ENCODE measurements at regions of chr7 and their contacts with region 1.

Region 1: DNA sequence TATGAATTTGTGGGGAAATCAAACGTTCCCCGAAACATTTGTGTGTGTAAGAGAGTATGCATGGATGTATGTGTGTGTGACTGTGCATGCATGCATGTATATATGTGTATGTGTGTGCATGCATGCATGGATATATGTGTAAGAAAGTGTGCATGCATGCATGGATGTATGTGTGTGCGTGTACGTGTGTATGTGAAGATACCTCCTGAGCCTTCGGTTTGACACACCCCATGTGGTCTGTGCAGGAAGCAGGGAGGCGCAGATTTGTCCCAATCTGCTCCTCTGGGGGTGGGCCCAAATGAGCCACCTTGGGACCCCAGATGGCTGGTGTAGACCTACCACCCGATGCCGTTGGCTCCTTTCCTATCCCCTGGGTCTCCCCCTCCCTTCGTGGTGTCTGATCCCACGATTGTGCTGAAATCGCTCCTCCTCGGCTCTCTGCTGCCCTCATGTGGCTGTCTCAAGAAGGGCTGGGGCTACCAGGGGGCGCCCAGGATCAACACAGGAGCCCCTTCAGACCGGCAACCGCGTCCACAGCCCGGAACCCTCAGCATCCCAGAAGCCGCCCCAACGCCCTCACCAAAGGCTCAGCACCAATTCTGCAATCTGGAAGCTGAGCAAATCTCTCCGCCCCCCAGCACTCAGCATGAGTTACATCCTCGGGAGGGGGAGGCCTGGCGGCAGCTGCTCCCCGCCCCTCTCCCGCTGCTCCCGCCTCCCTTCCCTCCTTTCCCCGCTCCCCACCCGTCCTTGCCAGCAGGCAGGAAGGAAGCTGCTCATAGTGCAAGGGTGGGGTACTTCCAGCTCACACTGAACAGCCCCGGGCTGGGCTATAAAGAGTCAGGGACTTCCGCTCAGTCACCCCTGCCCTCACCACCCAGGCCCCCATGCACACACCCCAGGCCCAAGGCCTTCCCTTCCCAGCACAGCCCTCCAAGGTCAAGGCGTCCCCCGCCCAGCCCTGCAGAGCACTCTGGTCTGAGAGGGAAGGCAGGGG is 2.3 kb upstream of the NOS3 start:
- DNase-seq: peak in 1 of 2 experiments; percentile 98
- H3K4me3 ChIP-seq: peak overlapping the region in 3 of 4 experiments; percentile 30 to 55 (median 42); a peak in 7 of 8 replicates
- H3K27ac ChIP-seq: no peak overlapping the region; the same call in 1 of the 2 replicates
- H3K4me1 ChIP-seq: peaks cover 4 to 17% (median 11%) of the 10 kb centered on the region in 4 experiments
- H3K27me3 ChIP-seq: no peaks in the 10 kb centered on the region
- CTCF ChIP-seq: peak in 2 of 3 experiments; percentile 92 to 97; a peak in 3 of 4 replicates
- EP300 ChIP-seq: no peak
- POLR2A ChIP-seq: no peak
- RAD21 ChIP-seq: peak; percentile 89 to 96

Region 2: DNA sequence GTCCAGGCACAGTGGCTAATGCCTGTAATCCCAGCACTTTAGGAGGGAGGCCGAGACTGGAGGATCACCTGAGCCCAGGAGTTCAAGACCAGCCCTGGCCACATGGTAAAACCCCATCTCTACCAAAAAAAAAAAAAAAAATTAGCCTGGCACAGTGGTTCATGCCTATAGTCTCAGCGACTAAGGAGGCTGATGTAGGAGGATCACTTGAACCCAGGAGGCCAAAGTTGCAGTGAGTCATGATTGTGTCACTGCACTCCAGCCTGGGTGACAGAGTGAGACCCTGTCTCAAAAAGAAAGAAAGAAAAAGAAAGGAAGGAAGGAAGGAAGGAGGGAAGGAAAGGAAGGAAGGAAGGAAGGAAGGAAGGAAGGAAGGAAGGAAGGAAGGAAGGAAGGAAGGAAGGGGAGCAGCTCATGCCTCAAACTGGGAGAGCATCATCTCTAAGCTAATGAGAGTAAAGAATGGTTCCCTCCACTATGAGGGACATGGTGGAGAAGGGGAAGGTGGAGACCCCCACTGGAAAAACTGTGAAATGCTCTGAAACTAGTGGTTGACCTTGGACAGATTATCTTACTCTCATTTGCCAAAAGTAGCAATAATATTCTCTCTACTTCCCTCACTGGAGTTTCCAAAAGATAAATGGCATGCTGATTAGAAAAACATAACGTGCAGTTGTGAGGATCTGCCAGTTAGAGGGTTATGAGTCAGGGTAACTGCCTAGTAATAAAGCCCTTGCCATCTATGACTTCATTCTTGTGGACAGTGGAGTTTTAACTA is 234.5 kb before region 1 on chr7:
- CTCF ChIA-PET with region 1: no interaction called
- POLR2A ChIA-PET with region 1: no interaction called
- DNase-seq: no peak
- H3K4me3 ChIP-seq: no peak overlapping the region
- H3K27ac ChIP-seq: no peak overlapping the region
- H3K4me1 ChIP-seq: no peaks in the 10 kb centered on the region
- H3K27me3 ChIP-seq: peaks cover 0 to 13% (median 7%) of the 10 kb centered on the region in 4 experiments; a peak in 5 of 7 replicates
- CTCF ChIP-seq: peak in 2 of 3 experiments; percentile 60 to 64; a peak in 3 of 4 replicates
- EP300 ChIP-seq: no peak
- POLR2A ChIP-seq: no peak
- RAD21 ChIP-seq: peak; percentile 77 to 78

Region 3: GRCh38 chr7:150941981-150942590 is 46.4 kb before region 1 on chr7:
- CTCF ChIA-PET with region 1: interaction called, 35 read pairs
- POLR2A ChIA-PET with region 1: no interaction called
- DNase-seq: no peak
- H3K4me3 ChIP-seq: no peak overlapping the region
- H3K27ac ChIP-seq: no peak overlapping the region
- H3K4me1 ChIP-seq: peaks cover 0 to 24% (median 12%) of the 10 kb centered on the region in 4 experiments; a peak in 6 of 7 replicates
- H3K27me3 ChIP-seq: peaks cover 0 to 9% (median 4%) of the 10 kb centered on the region in 4 experiments; a peak in 2 of 7 replicates
- CTCF ChIP-seq: no peak
- EP300 ChIP-seq: no peak
- POLR2A ChIP-seq: no peak
- RAD21 ChIP-seq: no peak

Region 4: GRCh38 chr7:150974468-150975391 is 13.8 kb before region 1 on chr7:
- CTCF ChIA-PET with region 1: interaction called, 797 read pairs
- POLR2A ChIA-PET with region 1: interaction called, 3 read pairs
- DNase-seq: peak in 1 of 2 experiments; percentile 72
- H3K4me3 ChIP-seq: peak overlapping the region; percentile 33 to 93 (median 58)
- H3K27ac ChIP-seq: no peak overlapping the region
- H3K4me1 ChIP-seq: peaks cover 5 to 39% (median 31%) of the 10 kb centered on the region in 4 experiments
- H3K27me3 ChIP-seq: peaks cover 2 to 24% (median 22%) of the 10 kb centered on the region in 4 experiments
- CTCF ChIP-seq: peak in 1 of 3 experiments; percentile 23; a peak in 2 of 4 replicates
- EP300 ChIP-seq: no peak
- POLR2A ChIP-seq: no peak
- RAD21 ChIP-seq: no peak

Region 5: GRCh38 chr7:151028131-151028947 is 39.8 kb after region 1 on chr7 and contains the start of gene ABCB8:
- CTCF ChIA-PET with region 1: interaction called, 12 read pairs
- POLR2A ChIA-PET with region 1: no interaction called
- DNase-seq: peak; percentile 99
- H3K4me3 ChIP-seq: peak within 1 kb of the TSS; percentile 66 to 97 (median 80)
- H3K27ac ChIP-seq: peak within 1 kb of the TSS; percentile 15; the same call in 1 of the 2 replicates
- H3K4me1 ChIP-seq: peaks cover 0 to 4% (median 2%) of the 10 kb centered on the region in 4 experiments; a peak in 2 of 7 replicates
- H3K27me3 ChIP-seq: peaks cover 0 to 4% (median 0%) of the 10 kb centered on the region in 4 experiments; a peak in 2 of 7 replicates
- CTCF ChIP-seq: peak; percentile 23 to 43 (median 30)
- EP300 ChIP-seq: no peak
- POLR2A ChIP-seq: no peak
- RAD21 ChIP-seq: peak; percentile 21 to 51; a peak in 3 of 4 replicates
- total RNA-seq, gene ABCB8: 22.2 and 27.0 TPM in 2 replicates

Region 6: GRCh38 chr7:151327659-151328058 is 339.1 kb after region 1 on chr7:
- CTCF ChIA-PET with region 1: no interaction called
- POLR2A ChIA-PET with region 1: no interaction called
- DNase-seq: no peak
- H3K4me3 ChIP-seq: no peak overlapping the region
- H3K27ac ChIP-seq: no peak overlapping the region
- H3K4me1 ChIP-seq: peaks cover 0 to 4% (median 1%) of the 10 kb centered on the region in 4 experiments; a peak in 4 of 7 replicates
- H3K27me3 ChIP-seq: no peaks in the 10 kb centered on the region
- CTCF ChIP-seq: no peak
- EP300 ChIP-seq: no peak
- POLR2A ChIP-seq: no peak
- RAD21 ChIP-seq: no peak